MCF 10A (cell line): ENCODE measurements at regions of chr1 and their contacts with region 1.

Region 1: GRCh38 chr1:201224666-201225370 is 34.2 kb downstream of the IGFN1 start:
- DNase-seq: no peak
- H3K4me3 Mint-ChIP-seq: no peak overlapping the region
- H3K27ac Mint-ChIP-seq: no peak overlapping the region
- H3K4me1 Mint-ChIP-seq: peaks cover 1% of the 10 kb centered on the region
- H3K27me3 Mint-ChIP-seq: no peaks in the 10 kb centered on the region
- CTCF ChIP-seq: no peak

Region 2: GRCh38 chr1:200558866-200559459 is 665.9 kb before region 1 on chr1:
- CTCF ChIA-PET with region 1: interaction called, 3 read pairs
- POLR2A ChIA-PET with region 1: no interaction called
- intact Hi-C with region 1: loop called (anchors 5 kb)
- DNase-seq: peak; percentile 62
- H3K4me3 Mint-ChIP-seq: no peak overlapping the region
- H3K27ac Mint-ChIP-seq: peak overlapping the region; percentile 28
- H3K4me1 Mint-ChIP-seq: peaks cover 6% of the 10 kb centered on the region
- H3K27me3 Mint-ChIP-seq: no peaks in the 10 kb centered on the region
- CTCF ChIP-seq: peak; percentile 81

Region 3: DNA sequence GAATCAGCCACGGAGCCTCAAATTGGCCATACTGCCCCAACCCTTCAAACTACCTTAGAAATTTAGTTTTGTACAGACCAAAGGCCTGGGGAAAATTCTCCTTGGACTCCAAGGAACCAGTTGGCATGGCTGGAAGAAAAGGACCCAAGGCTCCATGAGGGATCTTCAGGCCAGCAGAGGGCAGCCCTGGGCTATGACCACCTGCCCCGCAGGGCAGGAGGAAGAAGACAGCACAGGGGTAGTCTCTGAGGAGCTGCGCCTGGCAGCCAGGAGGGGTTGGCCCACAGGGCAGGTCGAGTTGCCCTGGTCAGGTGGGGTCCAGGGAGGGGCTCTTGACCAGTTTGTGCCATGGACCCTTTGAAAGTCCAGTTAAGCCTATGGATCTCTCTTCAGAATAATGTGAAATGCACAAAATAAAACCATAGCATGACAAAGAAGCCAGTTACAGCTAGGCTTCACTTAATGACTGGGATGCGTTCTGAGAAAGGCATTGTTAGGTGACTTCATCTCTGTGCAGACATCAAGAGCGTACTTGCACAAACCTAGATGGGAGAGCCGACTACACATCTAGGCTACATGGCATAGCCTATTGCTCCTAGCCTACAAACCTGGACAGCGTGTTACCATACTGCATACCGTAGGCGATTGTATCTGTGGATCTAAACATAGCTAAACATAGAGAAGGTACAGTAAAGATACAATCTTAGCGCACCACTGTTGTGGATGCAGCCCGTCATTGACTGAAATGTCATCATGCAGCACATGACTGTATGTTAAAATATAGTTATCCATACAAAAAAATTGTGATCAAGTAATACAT is 138.7 kb before region 1 on chr1:
- CTCF ChIA-PET with region 1: interaction called, 17 read pairs
- POLR2A ChIA-PET with region 1: no interaction called
- intact Hi-C with region 1: loop called (anchors 1 kb)
- DNase-seq: peak; percentile 82
- H3K4me3 Mint-ChIP-seq: no peak overlapping the region
- H3K27ac Mint-ChIP-seq: no peak overlapping the region
- H3K4me1 Mint-ChIP-seq: peaks cover 7% of the 10 kb centered on the region
- H3K27me3 Mint-ChIP-seq: peaks cover 31% of the 10 kb centered on the region
- CTCF ChIP-seq: peak; percentile 95

Region 4: DNA sequence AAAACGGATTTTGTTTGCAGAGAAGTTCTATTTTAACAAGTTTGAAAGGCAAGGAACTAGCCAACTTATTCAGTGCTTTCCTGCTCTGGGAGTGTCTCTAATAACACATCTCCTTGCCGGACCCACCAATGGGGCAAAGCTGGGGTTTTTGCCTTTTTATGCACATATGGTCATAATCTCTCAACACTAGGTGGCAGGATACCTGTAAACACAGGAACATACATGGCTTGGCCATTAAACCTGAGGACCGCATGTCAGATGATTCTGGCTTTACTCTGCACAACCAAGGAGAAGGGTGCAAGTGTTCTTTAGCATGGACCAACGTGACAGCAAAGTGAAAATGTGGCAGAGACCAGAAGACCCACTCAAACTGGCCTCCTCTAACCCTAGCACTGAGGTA is 75.4 kb before region 1 on chr1:
- CTCF ChIA-PET with region 1: interaction called, 90 read pairs
- POLR2A ChIA-PET with region 1: interaction called, 5 read pairs
- intact Hi-C with region 1: loop called (anchors 1 kb)
- DNase-seq: peak; percentile 80
- H3K4me3 Mint-ChIP-seq: no peak overlapping the region
- H3K27ac Mint-ChIP-seq: no peak overlapping the region
- H3K4me1 Mint-ChIP-seq: peaks cover 5% of the 10 kb centered on the region
- H3K27me3 Mint-ChIP-seq: no peaks in the 10 kb centered on the region
- CTCF ChIP-seq: peak; percentile 78

Region 5: GRCh38 chr1:201154389-201155165 is 70.2 kb before region 1 on chr1 and contains the start of gene TMEM9:
- CTCF ChIA-PET with region 1: interaction called, 90 read pairs
- POLR2A ChIA-PET with region 1: interaction called, 5 read pairs
- intact Hi-C with region 1: loop called (anchors 1 kb)
- DNase-seq: peak; percentile 99
- H3K4me3 Mint-ChIP-seq: peak within 1 kb of the TSS; percentile 82
- H3K27ac Mint-ChIP-seq: peak within 1 kb of the TSS; percentile 14
- H3K4me1 Mint-ChIP-seq: peaks cover 5% of the 10 kb centered on the region
- H3K27me3 Mint-ChIP-seq: peaks cover 12% of the 10 kb centered on the region
- CTCF ChIP-seq: no peak
- total RNA-seq, gene TMEM9: 67.2 and 71.7 TPM in 2 replicates

Region 6: DNA sequence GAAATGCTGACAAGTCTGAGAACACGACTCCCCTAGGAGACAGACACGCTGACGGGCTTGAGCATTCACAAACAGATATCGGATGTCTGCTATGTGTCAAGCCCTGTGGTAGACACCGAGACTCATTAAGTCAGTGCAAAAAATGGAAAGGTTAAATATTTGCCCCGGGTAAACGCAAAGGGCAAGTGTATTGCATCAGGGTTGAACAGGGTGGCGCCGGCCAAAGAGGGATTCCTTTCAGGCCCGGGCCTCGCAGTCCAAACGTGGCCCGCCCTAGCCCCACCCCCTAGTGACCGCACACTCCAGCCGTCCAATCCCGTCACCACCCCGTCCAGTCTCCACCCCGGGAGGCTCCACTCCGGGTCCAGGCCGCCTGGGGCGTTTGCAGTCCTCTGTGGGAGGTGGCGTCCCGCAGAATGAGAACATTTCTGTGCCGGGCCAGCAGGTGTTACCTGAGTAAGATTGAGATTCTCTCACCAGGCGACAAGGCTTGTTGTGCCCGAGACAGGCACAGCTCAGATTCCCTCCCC is 54.2 kb before region 1 on chr1:
- CTCF ChIA-PET with region 1: interaction called, 20 read pairs
- POLR2A ChIA-PET with region 1: no interaction called
- intact Hi-C with region 1: no loop called
- DNase-seq: peak; percentile 99
- H3K4me3 Mint-ChIP-seq: peak overlapping the region; percentile 73
- H3K27ac Mint-ChIP-seq: peak overlapping the region; percentile 75
- H3K4me1 Mint-ChIP-seq: peaks cover 20% of the 10 kb centered on the region
- H3K27me3 Mint-ChIP-seq: no peaks in the 10 kb centered on the region
- CTCF ChIP-seq: no peak

Region 7: DNA sequence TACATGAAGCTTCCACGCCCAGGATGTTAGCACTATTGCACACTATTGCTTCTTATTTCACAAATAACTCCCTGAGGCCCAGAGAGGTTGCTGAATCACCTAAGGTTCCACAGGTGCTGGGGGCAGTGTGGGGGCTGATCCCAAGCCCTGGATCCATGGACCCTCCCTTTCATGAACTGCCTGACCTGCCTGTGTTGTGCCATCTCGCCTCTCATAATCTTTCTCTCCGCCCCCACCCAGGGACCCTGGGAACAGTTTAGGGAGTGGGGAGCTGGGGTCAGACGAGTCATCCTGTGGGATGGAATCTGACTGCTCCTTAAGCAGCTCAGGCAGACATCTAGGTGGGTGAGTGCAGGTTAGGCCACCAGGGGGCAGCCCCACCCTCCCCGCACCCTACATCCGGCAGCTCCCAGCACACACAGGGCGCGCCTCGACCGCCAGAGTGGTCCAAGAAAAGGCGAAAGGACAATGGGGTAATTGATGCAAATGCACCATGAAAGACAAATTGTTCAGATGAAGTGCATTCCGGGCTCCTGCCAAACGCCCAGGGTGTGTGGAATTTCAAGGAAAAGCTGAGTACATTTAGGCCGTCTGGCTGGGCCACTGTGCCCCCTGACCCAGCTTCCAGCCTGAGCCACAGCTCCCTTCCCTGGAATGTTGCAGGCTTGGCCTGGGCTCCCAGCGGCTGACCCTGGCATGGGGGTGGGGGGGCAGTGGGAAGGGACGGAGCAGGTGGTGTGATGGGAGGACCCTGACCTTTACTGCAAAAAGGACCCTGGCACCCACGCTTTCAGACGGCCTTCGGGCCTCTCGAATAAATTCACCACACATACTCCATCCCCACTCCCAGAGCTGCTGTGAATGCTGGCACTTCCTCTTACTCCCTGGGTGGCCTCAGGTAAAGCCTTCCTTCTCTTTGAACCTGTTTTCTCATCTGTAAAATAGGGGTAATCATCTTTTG is 223.4 kb after region 1 on chr1:
- CTCF ChIA-PET with region 1: no interaction called
- POLR2A ChIA-PET with region 1: no interaction called
- intact Hi-C with region 1: no loop called
- DNase-seq: peak; percentile 89
- H3K4me3 Mint-ChIP-seq: no peak overlapping the region
- H3K27ac Mint-ChIP-seq: peak overlapping the region; percentile 36
- H3K4me1 Mint-ChIP-seq: peaks cover 8% of the 10 kb centered on the region
- H3K27me3 Mint-ChIP-seq: no peaks in the 10 kb centered on the region
- CTCF ChIP-seq: peak; percentile 98